ENCODE measurements at regions of chr10 and their contacts with region 1.

Region 1: DNA sequence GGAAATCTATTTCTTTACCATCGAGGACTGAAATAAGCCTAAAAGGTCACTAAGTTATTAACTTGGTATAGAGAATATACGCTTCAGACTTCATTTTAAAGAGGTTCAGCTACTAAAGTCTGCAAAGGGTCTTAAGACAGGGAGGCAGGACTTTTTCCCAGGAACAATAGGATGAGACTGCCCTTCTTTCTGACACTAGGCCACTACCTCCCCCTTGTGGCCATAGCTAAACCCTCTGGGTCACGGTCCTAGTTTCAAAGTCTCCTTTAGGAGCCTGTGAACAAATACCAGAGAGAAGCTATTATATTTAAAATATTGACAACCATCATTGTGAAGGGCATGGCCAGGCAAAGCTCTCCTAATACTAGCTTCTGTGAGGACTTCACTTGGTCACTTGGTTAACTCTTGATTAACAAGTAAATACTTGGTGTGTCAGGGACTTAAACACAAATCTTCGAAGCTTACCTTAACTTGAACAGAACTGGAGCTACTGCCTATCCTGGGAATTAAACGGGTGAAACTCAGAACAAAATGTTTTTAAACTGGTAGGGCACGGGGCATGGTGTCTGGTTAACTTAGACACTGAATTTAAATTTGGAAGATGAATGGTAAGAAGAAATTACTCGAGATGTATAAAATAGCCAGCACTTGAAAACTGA is 75.6 kb downstream of the CCDC6 start:
- DNase-seq: peak; percentile 56
- ATAC-seq: peak; percentile 82
- H3K4me3 ChIP-seq: no peak overlapping the region
- H3K27ac ChIP-seq: no peak overlapping the region
- H3K4me1 ChIP-seq: no peaks in the 10 kb centered on the region
- H3K27me3 ChIP-seq: no peaks in the 10 kb centered on the region
- CTCF ChIP-seq: peak; percentile 70
- POLR2A ChIP-seq: no peak
- RAD21 ChIP-seq: peak; percentile 60

Region 2: GRCh38 chr10:59524348-59524747 is 306.4 kb before region 1 on chr10:
- CTCF ChIA-PET with region 1: no interaction called
- POLR2A ChIA-PET with region 1: no interaction called
- dilution Hi-C with region 1: no loop called
- in situ Hi-C with region 1: no loop called
- intact Hi-C with region 1: no loop called
- DNase-seq: no peak
- ATAC-seq: no peak
- H3K4me3 ChIP-seq: no peak overlapping the region
- H3K27ac ChIP-seq: no peak overlapping the region
- H3K4me1 ChIP-seq: no peaks in the 10 kb centered on the region
- H3K27me3 ChIP-seq: no peaks in the 10 kb centered on the region
- CTCF ChIP-seq: no peak
- POLR2A ChIP-seq: no peak
- RAD21 ChIP-seq: no peak

Region 3: GRCh38 chr10:60048091-60048501 is 217.4 kb after region 1 on chr10:
- CTCF ChIA-PET with region 1: no interaction called
- POLR2A ChIA-PET with region 1: no interaction called
- dilution Hi-C with region 1: no loop called
- in situ Hi-C with region 1: no loop called
- intact Hi-C with region 1: loop called (anchors 5 kb)
- DNase-seq: no peak
- ATAC-seq: no peak; the same call in 1 of the 2 replicates
- H3K4me3 ChIP-seq: no peak overlapping the region
- H3K27ac ChIP-seq: no peak overlapping the region
- H3K4me1 ChIP-seq: peaks cover 5% of the 10 kb centered on the region; the same call in 1 of the 2 replicates
- H3K27me3 ChIP-seq: no peaks in the 10 kb centered on the region
- CTCF ChIP-seq: peak; percentile 37; the same call in 1 of the 2 replicates
- POLR2A ChIP-seq: no peak
- RAD21 ChIP-seq: peak; percentile 48

Measured in IMR-90 (cell line).